ENCODE measurements at regions of chr2 and their contacts with region 1.

Region 1: DNA sequence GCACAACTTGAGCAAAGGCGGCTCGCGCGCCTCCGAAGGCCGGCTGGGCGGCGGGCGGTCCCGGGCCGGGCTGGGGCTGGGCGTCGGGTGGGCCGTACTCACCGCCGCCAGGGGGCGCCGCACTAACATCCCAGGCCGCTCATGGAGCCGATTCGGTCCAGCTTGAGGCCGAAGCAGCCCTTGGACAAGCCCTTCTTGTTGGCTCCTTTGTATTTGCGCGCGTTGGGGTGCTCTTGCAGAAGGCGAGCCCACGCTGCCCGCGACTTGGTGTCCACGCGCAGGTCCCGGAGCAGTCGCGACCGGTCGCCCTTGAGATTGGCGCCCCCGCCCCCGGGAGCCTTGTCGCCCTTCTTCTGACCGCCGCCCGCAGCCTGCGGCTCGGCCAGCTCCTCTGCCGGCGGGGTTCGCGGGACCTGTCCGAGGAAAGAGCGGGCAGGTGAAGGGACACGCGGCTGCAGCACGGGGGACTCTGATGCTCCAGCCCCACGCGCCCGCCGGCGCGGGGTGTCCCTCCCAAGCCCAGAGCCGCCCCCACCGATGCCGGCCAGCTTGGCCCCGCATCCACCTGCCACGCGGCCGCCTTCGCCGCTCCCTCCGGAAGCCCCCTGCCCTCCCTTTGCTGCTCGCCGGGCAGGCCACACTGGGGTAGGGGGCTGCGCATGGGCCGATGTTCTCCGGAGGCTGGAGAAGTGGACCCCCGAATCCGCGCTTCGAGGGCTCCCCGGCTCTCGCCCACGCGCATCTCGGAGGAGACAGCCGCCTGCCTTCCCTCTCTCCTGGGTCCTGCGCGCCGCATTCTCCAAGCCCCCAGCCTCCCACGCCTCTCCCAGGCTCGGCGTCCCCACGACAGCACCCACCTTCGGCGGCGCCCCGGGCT is 655 bp downstream of the NPPC start:
- DNase-seq: no peak
- H3K4me3 ChIP-seq: peak overlapping the region; percentile 30 to 55
- H3K27ac ChIP-seq: no peak overlapping the region
- H3K4me1 ChIP-seq: peaks cover 20% of the 10 kb centered on the region
- H3K27me3 ChIP-seq: no peaks in the 10 kb centered on the region
- CTCF ChIP-seq: peak; percentile 81 to 94 (median 83)
- POLR2A ChIP-seq: no peak

Region 2: GRCh38 chr2:232142049-232142448 is 216.5 kb after region 1 on chr2:
- intact Hi-C with region 1: loop called (anchors 5 kb)
- DNase-seq: no peak
- H3K4me3 ChIP-seq: no peak overlapping the region
- H3K27ac ChIP-seq: no peak overlapping the region
- H3K4me1 ChIP-seq: no peaks in the 10 kb centered on the region
- H3K27me3 ChIP-seq: no peaks in the 10 kb centered on the region
- CTCF ChIP-seq: peak; percentile 30 to 49 (median 42)
- POLR2A ChIP-seq: no peak

Region 3: DNA sequence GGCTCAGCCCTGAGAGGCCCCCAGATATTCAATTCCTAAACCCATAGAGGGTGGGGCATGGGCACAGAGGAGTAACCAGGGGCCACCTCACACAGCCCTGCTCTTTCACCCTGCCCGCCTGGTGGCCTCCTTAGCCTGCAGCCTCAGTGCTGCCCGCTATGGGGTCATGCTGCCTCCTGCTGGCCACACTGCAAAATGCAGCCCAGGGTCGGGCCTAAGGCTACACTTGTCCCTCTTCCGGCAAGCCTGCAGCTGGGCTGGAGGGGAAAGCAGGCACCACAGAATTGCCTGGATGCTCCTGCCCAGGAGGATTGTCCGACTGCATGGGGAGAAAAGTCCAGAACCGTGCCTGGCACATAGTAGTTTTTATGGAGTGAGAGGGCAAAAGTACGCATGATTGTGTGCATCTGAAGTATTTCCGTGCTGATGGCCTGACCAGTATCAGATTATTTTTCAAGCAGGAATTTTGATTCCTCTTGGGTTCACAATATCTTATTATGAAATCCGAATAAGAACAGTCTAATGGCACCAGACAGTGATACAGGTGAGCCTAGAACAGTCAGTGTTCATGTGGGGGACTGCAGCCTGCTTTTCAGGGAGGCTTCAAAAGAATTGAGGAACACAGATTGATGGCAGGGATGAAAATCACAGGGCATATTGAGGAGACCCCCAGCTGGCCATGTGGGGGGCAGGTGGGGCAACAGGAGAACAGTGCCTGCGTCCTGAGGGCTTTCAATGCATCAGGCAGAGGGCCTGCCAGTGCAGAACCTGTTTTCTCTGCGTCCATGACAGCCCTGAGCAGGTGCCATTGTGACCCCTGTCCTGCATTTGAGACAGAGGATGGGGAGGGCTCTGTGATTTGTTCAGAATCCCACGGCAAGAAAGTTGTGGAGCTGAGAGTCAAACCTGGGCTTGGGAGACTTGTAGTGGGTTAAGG is 401.8 kb after region 1 on chr2:
- intact Hi-C with region 1: loop called (anchors 5 kb)
- DNase-seq: no peak
- H3K4me3 ChIP-seq: no peak overlapping the region
- H3K27ac ChIP-seq: no peak overlapping the region
- H3K4me1 ChIP-seq: peaks cover 14% of the 10 kb centered on the region
- H3K27me3 ChIP-seq: no peaks in the 10 kb centered on the region
- CTCF ChIP-seq: peak; percentile 58 to 85 (median 80)
- POLR2A ChIP-seq: no peak

Measured in vagina (tissue), 2 donors.